ENCODE measurements at regions of chr9 and their contacts with region 1.

Region 1: DNA sequence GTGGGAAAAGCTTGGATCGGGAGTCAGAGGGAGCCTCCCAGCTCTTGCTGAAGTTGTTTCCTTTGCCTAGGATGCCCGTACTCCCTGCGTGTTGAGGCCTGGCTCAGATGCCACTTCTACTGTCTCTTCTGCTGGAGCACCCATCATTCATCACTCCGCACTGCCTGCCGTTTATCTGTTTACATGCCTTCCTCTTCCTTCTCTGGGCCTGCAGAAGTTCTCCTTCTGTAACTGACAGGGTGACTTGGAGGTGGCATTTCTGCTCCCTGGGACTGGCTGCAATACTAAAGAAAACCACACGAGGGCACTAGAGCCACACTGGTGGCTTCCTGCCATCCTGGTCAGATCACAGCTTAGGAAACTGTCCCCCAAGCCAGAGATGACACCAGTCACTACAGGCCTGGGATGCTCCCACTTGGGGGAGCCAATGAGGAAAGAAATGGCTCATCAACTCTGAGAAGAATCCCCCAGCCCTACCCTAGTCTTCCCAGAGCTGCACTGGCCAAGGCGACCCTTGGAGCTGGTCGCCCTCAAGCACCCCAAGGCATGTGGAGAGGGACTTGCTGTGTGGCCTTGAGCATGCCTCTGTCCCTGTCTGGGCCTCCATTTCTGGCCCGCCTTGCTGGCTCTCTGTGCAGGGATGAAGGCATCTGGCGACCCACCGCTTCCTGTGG is 9.7 kb upstream of the SLC25A51 start:
- DNase-seq: peak; percentile 65 to 89 (median 78)
- ATAC-seq: peak; percentile 93
- H3K4me3 ChIP-seq: no peak overlapping the region
- H3K4me3 Mint-ChIP-seq: no peak overlapping the region
- H3K27ac ChIP-seq: no peak overlapping the region
- H3K27ac Mint-ChIP-seq: no peak overlapping the region
- H3K4me1 ChIP-seq: no peaks in the 10 kb centered on the region
- H3K4me1 Mint-ChIP-seq: no peaks in the 10 kb centered on the region
- H3K27me3 ChIP-seq: no peaks in the 10 kb centered on the region
- H3K27me3 Mint-ChIP-seq: peaks cover 2% of the 10 kb centered on the region
- CTCF ChIP-seq: peak; percentile 99

Region 2: GRCh38 chr9:37925786-37926736 is 12.4 kb after region 1 on chr9:
- CTCF ChIA-PET with region 1: interaction called, 16 read pairs
- POLR2A ChIA-PET with region 1: no interaction called
- intact Hi-C with region 1: no loop called
- DNase-seq: no peak
- ATAC-seq: no peak
- H3K4me3 ChIP-seq: no peak overlapping the region
- H3K4me3 Mint-ChIP-seq: no peak overlapping the region
- H3K27ac ChIP-seq: no peak overlapping the region
- H3K27ac Mint-ChIP-seq: no peak overlapping the region
- H3K4me1 ChIP-seq: no peaks in the 10 kb centered on the region
- H3K4me1 Mint-ChIP-seq: no peaks in the 10 kb centered on the region
- H3K27me3 ChIP-seq: no peaks in the 10 kb centered on the region
- H3K27me3 Mint-ChIP-seq: peaks cover 2% of the 10 kb centered on the region
- CTCF ChIP-seq: no peak

Region 3: DNA sequence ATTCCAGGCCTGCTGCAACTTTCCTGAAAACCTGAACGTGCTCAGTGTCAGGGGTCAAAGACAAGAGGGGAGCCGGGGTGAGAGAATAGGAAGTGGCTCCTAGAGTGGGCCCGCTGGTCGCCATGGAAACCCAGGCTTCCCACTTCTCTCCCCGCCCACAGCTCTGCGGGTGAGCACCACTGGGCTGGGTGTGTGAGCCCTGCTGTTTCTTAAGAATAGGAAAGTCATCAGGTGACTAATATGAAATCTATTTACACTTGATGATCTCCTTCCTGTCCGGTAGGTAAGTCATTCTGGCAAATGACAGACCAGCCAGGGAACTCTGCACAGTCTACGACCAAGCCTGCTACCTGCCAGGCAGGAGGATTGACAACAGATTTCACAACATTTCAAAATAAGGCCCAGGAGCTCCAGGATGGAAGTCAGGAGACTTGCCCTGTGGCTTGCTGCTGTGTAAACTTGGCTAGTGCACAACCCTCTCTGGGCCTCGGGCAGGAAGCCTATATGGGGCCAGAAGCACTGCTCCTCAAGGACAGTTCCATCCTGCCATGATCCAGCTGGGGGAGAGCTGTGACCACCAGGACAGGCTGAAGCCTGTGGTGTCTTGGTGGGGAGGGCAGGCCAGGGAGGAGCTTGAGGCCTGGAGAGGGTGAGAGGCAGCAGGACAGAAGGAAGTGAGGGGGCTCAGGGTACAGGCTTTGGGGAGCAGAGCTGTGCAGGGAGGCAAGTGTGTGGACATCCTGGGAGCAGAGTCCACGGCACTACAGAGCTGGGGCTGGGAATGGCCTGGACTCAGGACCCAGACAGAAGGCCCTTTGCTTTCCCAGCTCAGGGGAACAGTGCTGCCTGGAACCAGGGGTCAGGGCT is 94.8 kb after region 1 on chr9:
- CTCF ChIA-PET with region 1: no interaction called
- POLR2A ChIA-PET with region 1: no interaction called
- intact Hi-C with region 1: no loop called
- DNase-seq: peak in 2 of 9 experiments; percentile 47 to 66
- ATAC-seq: no peak
- H3K4me3 ChIP-seq: no peak overlapping the region
- H3K4me3 Mint-ChIP-seq: no peak overlapping the region
- H3K27ac ChIP-seq: peak overlapping the region in 1 of 2 experiments; percentile 47
- H3K27ac Mint-ChIP-seq: no peak overlapping the region
- H3K4me1 ChIP-seq: peaks cover 11% of the 10 kb centered on the region
- H3K4me1 Mint-ChIP-seq: peaks cover 13% of the 10 kb centered on the region
- H3K27me3 ChIP-seq: no peaks in the 10 kb centered on the region
- H3K27me3 Mint-ChIP-seq: no peaks in the 10 kb centered on the region
- CTCF ChIP-seq: no peak

Region 4: GRCh38 chr9:38160613-38161215 is 247.1 kb after region 1 on chr9:
- CTCF ChIA-PET with region 1: interaction called, 36 read pairs
- POLR2A ChIA-PET with region 1: no interaction called
- intact Hi-C with region 1: loop called in 1 of 2 experiments (anchors 2 kb)
- DNase-seq: peak; percentile 13 to 72 (median 57)
- ATAC-seq: no peak
- H3K4me3 ChIP-seq: no peak overlapping the region
- H3K4me3 Mint-ChIP-seq: no peak overlapping the region
- H3K27ac ChIP-seq: no peak overlapping the region
- H3K27ac Mint-ChIP-seq: no peak overlapping the region
- H3K4me1 ChIP-seq: no peaks in the 10 kb centered on the region
- H3K4me1 Mint-ChIP-seq: peaks cover 6% of the 10 kb centered on the region
- H3K27me3 ChIP-seq: no peaks in the 10 kb centered on the region
- H3K27me3 Mint-ChIP-seq: no peaks in the 10 kb centered on the region
- CTCF ChIP-seq: peak; percentile 74

Region 5: DNA sequence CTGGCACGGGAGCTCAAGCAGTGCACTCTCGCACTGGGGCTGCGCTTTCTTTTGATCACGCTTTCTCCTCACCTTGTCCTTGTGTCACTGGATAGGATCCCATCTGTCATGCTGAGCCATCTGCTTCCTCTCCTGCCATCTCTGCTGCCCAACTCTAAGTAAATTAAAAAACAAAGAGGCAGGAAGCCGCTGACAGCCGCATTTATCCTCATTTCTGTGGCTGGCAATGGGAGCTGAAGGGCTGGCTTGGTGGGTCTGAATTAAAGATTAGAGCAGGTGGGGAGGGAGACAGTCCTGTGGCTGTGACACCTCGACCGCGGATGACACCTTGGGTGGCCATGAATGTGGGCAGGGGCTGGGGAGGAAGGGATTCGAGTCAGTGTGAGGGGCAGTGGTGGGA is 319.7 kb after region 1 on chr9:
- CTCF ChIA-PET with region 1: no interaction called
- POLR2A ChIA-PET with region 1: no interaction called
- intact Hi-C with region 1: no loop called
- DNase-seq: peak in 1 of 9 experiments; percentile 23
- ATAC-seq: no peak
- H3K4me3 ChIP-seq: no peak overlapping the region
- H3K4me3 Mint-ChIP-seq: no peak overlapping the region
- H3K27ac ChIP-seq: no peak overlapping the region
- H3K27ac Mint-ChIP-seq: no peak overlapping the region
- H3K4me1 ChIP-seq: no peaks in the 10 kb centered on the region
- H3K4me1 Mint-ChIP-seq: no peaks in the 10 kb centered on the region
- H3K27me3 ChIP-seq: no peaks in the 10 kb centered on the region
- H3K27me3 Mint-ChIP-seq: peaks cover 3% of the 10 kb centered on the region
- CTCF ChIP-seq: no peak

Region 6: DNA sequence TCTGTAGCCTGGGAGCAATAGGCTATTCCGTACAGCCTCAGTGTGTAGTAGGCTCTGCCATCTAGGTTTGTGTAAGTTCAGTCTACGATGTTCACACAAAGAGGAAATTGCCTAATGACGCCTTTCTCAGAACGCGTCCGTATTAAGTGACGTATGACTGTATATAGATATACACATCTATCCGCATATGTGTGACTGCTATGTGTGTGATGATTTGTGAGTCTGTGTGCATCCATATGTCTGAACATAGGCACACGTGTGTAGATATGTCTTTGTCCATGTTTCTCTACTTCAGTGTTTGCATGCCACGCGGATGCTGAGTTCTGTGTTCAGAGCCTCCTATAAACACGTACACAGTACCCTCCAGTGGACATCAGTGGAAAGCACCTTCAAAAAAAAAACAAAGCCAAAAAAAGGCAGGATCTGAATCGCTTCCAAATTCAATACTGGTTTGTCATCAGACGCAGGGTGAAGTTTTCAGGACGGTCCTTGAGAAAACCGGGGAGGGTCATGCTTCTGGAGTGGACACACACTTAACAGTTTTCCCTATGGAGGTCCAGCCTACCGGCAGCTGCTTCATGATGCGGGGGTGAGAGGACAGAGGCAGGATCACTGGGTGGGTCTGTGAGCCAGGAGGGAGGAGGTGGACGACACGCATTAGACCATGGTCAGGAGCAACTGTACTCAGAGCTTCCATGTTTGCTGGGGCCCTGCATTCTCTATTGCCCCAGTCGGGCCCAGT is 449.4 kb after region 1 on chr9:
- CTCF ChIA-PET with region 1: no interaction called
- POLR2A ChIA-PET with region 1: no interaction called
- intact Hi-C with region 1: loop called in 1 of 2 experiments (anchors 2 kb)
- DNase-seq: peak in 3 of 9 experiments; percentile 10 to 57 (median 36)
- ATAC-seq: peak; percentile 77
- H3K4me3 ChIP-seq: no peak overlapping the region
- H3K4me3 Mint-ChIP-seq: peak overlapping the region; percentile 72
- H3K27ac ChIP-seq: no peak overlapping the region
- H3K27ac Mint-ChIP-seq: no peak overlapping the region
- H3K4me1 ChIP-seq: no peaks in the 10 kb centered on the region
- H3K4me1 Mint-ChIP-seq: peaks cover 4% of the 10 kb centered on the region
- H3K27me3 ChIP-seq: no peaks in the 10 kb centered on the region
- H3K27me3 Mint-ChIP-seq: no peaks in the 10 kb centered on the region
- CTCF ChIP-seq: no peak

Region 7: DNA sequence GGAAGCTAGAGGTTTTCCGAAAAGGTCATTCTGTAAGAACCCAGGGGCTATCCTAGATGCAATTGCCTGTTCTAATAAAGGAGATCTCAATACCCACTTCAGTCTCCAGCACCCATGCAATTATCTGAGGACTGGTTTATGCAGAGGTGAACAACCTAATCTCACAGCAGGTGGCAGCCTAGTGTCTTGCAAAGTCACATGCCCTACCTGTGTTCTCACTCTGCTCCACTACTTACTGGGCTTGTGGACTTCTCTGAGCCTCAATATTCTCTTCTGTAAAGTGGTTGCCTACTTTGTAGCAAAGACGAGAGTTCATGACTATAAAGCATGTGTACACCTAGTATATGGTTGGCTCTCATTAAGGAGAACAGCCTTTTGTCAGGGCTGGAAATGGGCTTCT is 457.9 kb after region 1 on chr9:
- CTCF ChIA-PET with region 1: no interaction called
- POLR2A ChIA-PET with region 1: no interaction called
- intact Hi-C with region 1: loop called in 1 of 2 experiments (anchors 2 kb)
- DNase-seq: peak in 3 of 9 experiments; percentile 15 to 53 (median 45)
- ATAC-seq: no peak
- H3K4me3 ChIP-seq: no peak overlapping the region
- H3K4me3 Mint-ChIP-seq: no peak overlapping the region
- H3K27ac ChIP-seq: no peak overlapping the region
- H3K27ac Mint-ChIP-seq: no peak overlapping the region
- H3K4me1 ChIP-seq: no peaks in the 10 kb centered on the region
- H3K4me1 Mint-ChIP-seq: no peaks in the 10 kb centered on the region
- H3K27me3 ChIP-seq: no peaks in the 10 kb centered on the region
- H3K27me3 Mint-ChIP-seq: peaks cover 16% of the 10 kb centered on the region
- CTCF ChIP-seq: no peak

Region 8: DNA sequence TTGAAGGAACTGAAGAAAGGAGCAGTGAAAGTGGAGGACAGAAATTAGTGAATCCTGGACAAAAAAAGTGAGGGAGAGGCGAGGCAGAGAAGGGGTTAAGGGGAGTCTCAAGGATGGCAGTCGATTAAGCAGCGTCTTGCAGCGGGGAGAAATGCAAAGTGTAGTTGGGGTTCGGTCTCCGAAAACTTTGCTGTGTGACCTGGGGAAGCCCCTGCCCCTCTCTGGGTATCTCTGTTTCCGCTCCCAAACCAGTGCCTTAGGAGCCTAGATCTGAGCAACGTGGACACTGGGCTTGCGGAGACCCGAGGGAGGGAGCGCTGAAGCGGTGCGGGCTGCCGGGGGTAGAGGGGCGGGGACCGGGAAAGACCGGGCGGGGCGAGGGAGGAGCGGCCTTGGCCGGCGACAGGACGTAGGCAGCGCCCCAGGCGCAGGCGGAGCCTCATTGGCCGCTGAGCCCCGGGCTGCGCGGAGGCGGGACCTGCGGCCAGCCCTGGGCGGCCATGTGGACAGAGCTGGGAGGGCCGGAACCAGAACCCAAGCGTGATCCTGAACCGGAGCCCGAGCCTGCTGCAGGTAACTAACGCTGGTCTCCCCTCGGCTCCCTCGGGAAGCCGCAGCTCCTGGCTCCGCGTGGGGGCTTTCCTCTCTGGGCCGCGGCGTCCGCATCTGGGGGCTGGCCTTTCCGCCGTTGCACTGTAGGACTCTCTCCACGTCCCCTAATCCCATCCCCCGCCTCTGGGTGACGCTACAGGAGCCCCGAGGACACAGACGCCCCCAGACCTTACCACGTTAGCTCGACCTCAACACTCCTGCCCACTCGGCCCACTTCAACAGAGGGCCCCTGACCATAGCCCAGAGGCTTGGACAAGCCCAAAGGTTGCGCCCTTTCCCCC is 478.9 kb after region 1 on chr9 and contains the start of gene ALDH1B1:
- CTCF ChIA-PET with region 1: interaction called, 6 read pairs
- POLR2A ChIA-PET with region 1: no interaction called
- intact Hi-C with region 1: loop called in 1 of 2 experiments (anchors 10 kb)
- DNase-seq: peak; percentile 14 to 81 (median 61)
- ATAC-seq: peak; percentile 93
- H3K4me3 ChIP-seq: peak within 1 kb of the TSS; percentile 63 to 89
- H3K4me3 Mint-ChIP-seq: peak within 1 kb of the TSS; percentile 85
- H3K27ac ChIP-seq: peak within 1 kb of the TSS; percentile 11 to 46
- H3K27ac Mint-ChIP-seq: peak within 1 kb of the TSS; percentile 69
- H3K4me1 ChIP-seq: no peaks in the 10 kb centered on the region
- H3K4me1 Mint-ChIP-seq: peaks cover 17% of the 10 kb centered on the region
- H3K27me3 ChIP-seq: no peaks in the 10 kb centered on the region
- H3K27me3 Mint-ChIP-seq: no peaks in the 10 kb centered on the region
- CTCF ChIP-seq: no peak
- total RNA-seq, gene ALDH1B1: 0.50 to 0.71 TPM

Region 9: DNA sequence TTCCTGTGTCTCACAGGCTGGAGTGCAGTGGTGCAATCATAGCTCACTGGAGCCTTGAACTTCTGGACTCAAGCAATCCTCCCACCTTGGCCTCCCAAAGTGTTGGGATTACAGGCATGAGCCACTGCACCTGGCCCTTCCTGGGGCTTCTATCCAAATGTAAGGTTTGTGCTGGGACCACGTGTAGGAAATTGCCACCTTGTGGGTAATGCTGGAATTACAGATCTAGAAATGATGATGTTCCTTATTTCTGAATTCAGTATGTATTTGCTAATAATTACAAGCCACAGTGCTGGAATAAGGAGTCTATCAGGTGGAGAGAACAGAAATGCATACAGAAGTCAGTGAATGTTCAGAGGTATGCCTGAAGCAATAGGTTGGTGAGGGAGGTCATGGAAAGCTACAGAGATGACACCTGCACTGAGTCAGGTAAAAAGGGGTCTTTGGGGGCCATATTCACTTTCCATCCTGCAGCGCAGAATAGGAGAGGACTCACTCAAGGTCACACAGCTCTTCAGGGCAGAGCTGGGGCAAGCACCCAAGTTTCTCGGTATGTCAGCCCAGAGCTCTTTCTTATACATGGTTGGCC is 519.4 kb after region 1 on chr9:
- CTCF ChIA-PET with region 1: interaction called, 42 read pairs
- POLR2A ChIA-PET with region 1: no interaction called
- intact Hi-C with region 1: loop called in 1 of 2 experiments (anchors 1 kb)
- DNase-seq: peak in 2 of 9 experiments; percentile 37 to 51
- ATAC-seq: no peak
- H3K4me3 ChIP-seq: no peak overlapping the region
- H3K4me3 Mint-ChIP-seq: no peak overlapping the region
- H3K27ac ChIP-seq: no peak overlapping the region
- H3K27ac Mint-ChIP-seq: no peak overlapping the region
- H3K4me1 ChIP-seq: no peaks in the 10 kb centered on the region
- H3K4me1 Mint-ChIP-seq: peaks cover 6% of the 10 kb centered on the region
- H3K27me3 ChIP-seq: peaks cover 0 to 2% of the 10 kb centered on the region in 2 experiments
- H3K27me3 Mint-ChIP-seq: peaks cover 5% of the 10 kb centered on the region
- CTCF ChIP-seq: peak; percentile 63

Measured in CD8-positive, alpha-beta T cell (primary cell).